ENCODE measurements at regions of chr11 and their contacts with region 1.

Region 1: GRCh38 chr11:59753650-59754493 is 1.3 kb upstream of the STX3 start:
- DNase-seq: peak; percentile 89
- ATAC-seq: peak; percentile 73
- H3K4me3 ChIP-seq: peak overlapping the region; percentile 72 to 97 (median 80)
- H3K4me3 Mint-ChIP-seq: peak overlapping the region; percentile 94
- H3K27ac ChIP-seq: no peak overlapping the region
- H3K27ac Mint-ChIP-seq: peak overlapping the region; percentile 84
- H3K4me1 ChIP-seq: peaks cover 14 to 26% of the 10 kb centered on the region in 2 donors
- H3K4me1 Mint-ChIP-seq: peaks cover 24% of the 10 kb centered on the region
- H3K27me3 ChIP-seq: peaks cover 0 to 5% (median 0%) of the 10 kb centered on the region in 4 experiments
- H3K27me3 Mint-ChIP-seq: peaks cover 10% of the 10 kb centered on the region
- CTCF ChIP-seq: peak; percentile 96

Region 2: GRCh38 chr11:59025097-59025496 is 728.8 kb before region 1 on chr11:
- CTCF ChIA-PET with region 1: no interaction called
- POLR2A ChIA-PET with region 1: no interaction called
- intact Hi-C with region 1: no loop called
- DNase-seq: no peak
- ATAC-seq: no peak
- H3K4me3 ChIP-seq: no peak overlapping the region
- H3K4me3 Mint-ChIP-seq: no peak overlapping the region
- H3K27ac ChIP-seq: no peak overlapping the region
- H3K27ac Mint-ChIP-seq: no peak overlapping the region
- H3K4me1 ChIP-seq: no peaks in the 10 kb centered on the region
- H3K4me1 Mint-ChIP-seq: peaks cover 10% of the 10 kb centered on the region
- H3K27me3 ChIP-seq: no peaks in the 10 kb centered on the region
- H3K27me3 Mint-ChIP-seq: no peaks in the 10 kb centered on the region
- CTCF ChIP-seq: no peak

Region 3: GRCh38 chr11:59550368-59550841 is 203.5 kb before region 1 on chr11:
- CTCF ChIA-PET with region 1: no interaction called
- POLR2A ChIA-PET with region 1: no interaction called
- intact Hi-C with region 1: loop called (anchors 10 kb)
- DNase-seq: peak; percentile 94
- ATAC-seq: peak; percentile 90
- H3K4me3 ChIP-seq: peak overlapping the region; percentile 46 to 87 (median 76)
- H3K4me3 Mint-ChIP-seq: peak overlapping the region; percentile 88
- H3K27ac ChIP-seq: peak overlapping the region; percentile 35 to 54
- H3K27ac Mint-ChIP-seq: peak overlapping the region; percentile 92
- H3K4me1 ChIP-seq: peaks cover 9 to 17% of the 10 kb centered on the region in 2 donors
- H3K4me1 Mint-ChIP-seq: peaks cover 29% of the 10 kb centered on the region
- H3K27me3 ChIP-seq: no peaks in the 10 kb centered on the region
- H3K27me3 Mint-ChIP-seq: no peaks in the 10 kb centered on the region
- CTCF ChIP-seq: peak; percentile 68

Region 4: GRCh38 chr11:59668950-59669610 is 84.8 kb before region 1 on chr11 and contains the start of gene PATL1:
- CTCF ChIA-PET with region 1: interaction called, 4 read pairs
- POLR2A ChIA-PET with region 1: no interaction called
- intact Hi-C with region 1: loop called (anchors 2 kb)
- DNase-seq: peak; percentile 100
- ATAC-seq: peak; percentile 89
- H3K4me3 ChIP-seq: peak within 1 kb of the TSS; percentile 81 to 96 (median 93)
- H3K4me3 Mint-ChIP-seq: peak within 1 kb of the TSS; percentile 98
- H3K27ac ChIP-seq: peak within 1 kb of the TSS; percentile 98 to 100
- H3K27ac Mint-ChIP-seq: peak within 1 kb of the TSS; percentile 100
- H3K4me1 ChIP-seq: peaks cover 20% of the 10 kb centered on the region in 2 donors
- H3K4me1 Mint-ChIP-seq: peaks cover 33% of the 10 kb centered on the region
- H3K27me3 ChIP-seq: no peaks in the 10 kb centered on the region
- H3K27me3 Mint-ChIP-seq: no peaks in the 10 kb centered on the region
- CTCF ChIP-seq: peak; percentile 0
- total RNA-seq, gene PATL1: 45.0 and 46.0 TPM in 2 replicates

Region 5: GRCh38 chr11:59767225-59767611 is 13.3 kb after region 1 on chr11:
- CTCF ChIA-PET with region 1: interaction called, 53 read pairs
- POLR2A ChIA-PET with region 1: no interaction called
- intact Hi-C with region 1: loop called (anchors 1 kb)
- DNase-seq: no peak
- ATAC-seq: no peak
- H3K4me3 ChIP-seq: no peak overlapping the region
- H3K4me3 Mint-ChIP-seq: no peak overlapping the region
- H3K27ac ChIP-seq: peak overlapping the region in 1 of 2 donors; percentile 42
- H3K27ac Mint-ChIP-seq: peak overlapping the region; percentile 69
- H3K4me1 ChIP-seq: peaks cover 17 to 29% of the 10 kb centered on the region in 2 donors
- H3K4me1 Mint-ChIP-seq: peaks cover 22% of the 10 kb centered on the region
- H3K27me3 ChIP-seq: no peaks in the 10 kb centered on the region
- H3K27me3 Mint-ChIP-seq: no peaks in the 10 kb centered on the region
- CTCF ChIP-seq: no peak

Region 6: DNA sequence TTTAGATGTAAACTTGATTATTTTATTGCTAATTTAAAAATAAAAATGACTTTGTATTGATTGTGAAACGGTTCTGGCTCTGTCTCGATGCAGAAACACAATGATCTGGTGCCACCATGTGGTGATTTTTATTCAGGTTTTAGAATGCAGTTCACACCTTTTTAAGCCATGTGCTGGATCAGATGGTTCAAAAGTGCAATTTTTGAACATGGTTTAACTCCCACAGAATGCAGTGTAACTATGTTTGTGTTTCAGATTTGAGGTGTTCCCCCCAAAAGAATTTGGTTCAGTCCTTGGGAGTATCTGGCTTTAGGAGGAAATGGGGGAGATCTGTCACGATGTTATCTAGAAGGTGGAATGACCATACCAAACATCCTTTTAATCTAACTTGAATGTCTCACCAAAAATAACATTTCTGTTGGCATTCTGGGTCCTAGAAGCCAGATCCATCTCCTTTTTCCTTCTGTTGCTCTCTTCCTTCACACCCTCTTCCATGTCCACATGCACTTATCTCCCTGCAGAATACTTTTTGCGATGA is 48.8 kb after region 1 on chr11:
- CTCF ChIA-PET with region 1: interaction called, 206 read pairs
- POLR2A ChIA-PET with region 1: interaction called, 5 read pairs
- intact Hi-C with region 1: no loop called
- DNase-seq: peak; percentile 79
- ATAC-seq: peak; percentile 64
- H3K4me3 ChIP-seq: no peak overlapping the region
- H3K4me3 Mint-ChIP-seq: no peak overlapping the region
- H3K27ac ChIP-seq: no peak overlapping the region
- H3K27ac Mint-ChIP-seq: no peak overlapping the region
- H3K4me1 ChIP-seq: no peaks in the 10 kb centered on the region
- H3K4me1 Mint-ChIP-seq: no peaks in the 10 kb centered on the region
- H3K27me3 ChIP-seq: no peaks in the 10 kb centered on the region
- H3K27me3 Mint-ChIP-seq: no peaks in the 10 kb centered on the region
- CTCF ChIP-seq: peak; percentile 80

Region 7: GRCh38 chr11:59810189-59810910 is 56.5 kb after region 1 on chr11 and contains the start of gene MRPL16:
- CTCF ChIA-PET with region 1: interaction called, 206 read pairs
- POLR2A ChIA-PET with region 1: no interaction called
- intact Hi-C with region 1: loop called (anchors 1 kb)
- DNase-seq: peak; percentile 94
- ATAC-seq: peak; percentile 98
- H3K4me3 ChIP-seq: peak within 1 kb of the TSS; percentile 72 to 95 (median 82)
- H3K4me3 Mint-ChIP-seq: peak within 1 kb of the TSS; percentile 93
- H3K27ac ChIP-seq: peak within 1 kb of the TSS; percentile 61 to 76
- H3K27ac Mint-ChIP-seq: peak within 1 kb of the TSS; percentile 85
- H3K4me1 ChIP-seq: peaks cover 10 to 18% of the 10 kb centered on the region in 2 donors
- H3K4me1 Mint-ChIP-seq: peaks cover 14% of the 10 kb centered on the region
- H3K27me3 ChIP-seq: no peaks in the 10 kb centered on the region
- H3K27me3 Mint-ChIP-seq: peaks cover 7% of the 10 kb centered on the region
- CTCF ChIP-seq: peak; percentile 52
- total RNA-seq, gene MRPL16: 38.3 and 38.9 TPM in 2 replicates

Region 8: DNA sequence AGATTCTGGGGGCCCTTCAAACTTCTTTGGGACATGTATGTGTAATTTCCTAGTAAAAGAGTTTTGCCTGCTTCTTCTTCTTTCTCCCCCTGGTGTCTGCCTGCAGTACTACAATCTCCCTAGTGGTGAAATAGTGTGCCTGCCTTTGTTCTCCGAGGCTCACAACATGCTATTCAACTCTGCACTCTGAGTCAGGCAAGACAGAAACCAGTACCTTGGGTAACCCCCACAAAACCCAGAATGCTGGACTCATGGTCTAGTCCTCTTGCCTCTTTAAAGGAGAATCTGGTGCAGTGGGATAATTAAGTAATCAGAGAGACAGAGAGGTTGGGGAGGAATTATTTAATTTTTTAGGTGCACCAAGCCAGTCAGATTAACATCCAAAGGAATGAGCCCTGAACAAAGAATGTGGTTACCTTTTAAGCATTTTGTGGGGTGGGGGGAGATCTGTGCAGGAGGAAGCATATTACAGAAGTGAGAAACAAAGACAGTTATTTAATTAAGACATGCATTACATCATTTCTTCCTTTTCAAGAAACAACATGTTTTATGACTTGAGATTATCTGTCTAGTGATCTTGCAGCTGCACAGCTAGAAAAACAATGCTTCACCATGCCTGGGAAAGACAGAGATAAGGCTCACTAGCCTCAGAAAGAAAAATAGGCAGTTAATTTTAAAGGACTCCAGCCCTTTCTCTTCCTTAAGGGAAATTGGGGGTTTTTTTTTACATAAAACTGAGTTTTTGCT is 440.0 kb after region 1 on chr11:
- CTCF ChIA-PET with region 1: no interaction called
- POLR2A ChIA-PET with region 1: no interaction called
- intact Hi-C with region 1: loop called (anchors 5 kb)
- DNase-seq: peak; percentile 58
- ATAC-seq: peak; percentile 88
- H3K4me3 ChIP-seq: no peak overlapping the region
- H3K4me3 Mint-ChIP-seq: peak overlapping the region; percentile 0
- H3K27ac ChIP-seq: no peak overlapping the region
- H3K27ac Mint-ChIP-seq: peak overlapping the region; percentile 23
- H3K4me1 ChIP-seq: peaks cover 10 to 18% of the 10 kb centered on the region in 2 donors
- H3K4me1 Mint-ChIP-seq: peaks cover 17% of the 10 kb centered on the region
- H3K27me3 ChIP-seq: peaks cover 0 to 4% (median 0%) of the 10 kb centered on the region in 4 experiments
- H3K27me3 Mint-ChIP-seq: no peaks in the 10 kb centered on the region
- CTCF ChIP-seq: peak; percentile 73